CD8-positive, alpha-beta T cell (primary cell): ENCODE measurements at regions of chr11 and their contacts with region 1.

Region 1: DNA sequence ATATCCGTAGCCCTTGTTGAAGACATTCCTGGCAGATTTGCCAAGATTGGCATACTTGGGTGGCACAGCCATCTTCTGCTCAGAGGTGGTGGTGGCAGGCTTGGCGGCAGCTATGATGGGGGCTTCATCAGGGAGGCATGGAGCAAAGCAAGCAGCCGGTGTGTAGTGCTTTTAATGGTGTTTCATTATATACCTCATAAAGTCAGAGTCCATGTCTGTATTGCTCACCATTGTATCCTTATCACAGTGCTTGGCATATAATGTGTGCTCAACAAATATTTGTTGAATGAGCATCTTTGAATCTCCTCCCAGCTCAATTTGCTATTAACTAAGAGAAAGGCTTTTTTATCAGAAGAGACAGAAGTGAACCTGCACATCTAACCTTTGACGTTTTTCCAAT is 7.8 kb upstream of the DNHD1 start:
- DNase-seq: no peak
- ATAC-seq: no peak
- H3K4me3 ChIP-seq: no peak overlapping the region
- H3K4me3 Mint-ChIP-seq: no peak overlapping the region
- H3K27ac ChIP-seq: no peak overlapping the region
- H3K27ac Mint-ChIP-seq: no peak overlapping the region
- H3K4me1 ChIP-seq: no peaks in the 10 kb centered on the region
- H3K4me1 Mint-ChIP-seq: peaks cover 4% of the 10 kb centered on the region
- H3K27me3 ChIP-seq: no peaks in the 10 kb centered on the region
- H3K27me3 Mint-ChIP-seq: no peaks in the 10 kb centered on the region
- CTCF ChIP-seq: no peak

Region 2: DNA sequence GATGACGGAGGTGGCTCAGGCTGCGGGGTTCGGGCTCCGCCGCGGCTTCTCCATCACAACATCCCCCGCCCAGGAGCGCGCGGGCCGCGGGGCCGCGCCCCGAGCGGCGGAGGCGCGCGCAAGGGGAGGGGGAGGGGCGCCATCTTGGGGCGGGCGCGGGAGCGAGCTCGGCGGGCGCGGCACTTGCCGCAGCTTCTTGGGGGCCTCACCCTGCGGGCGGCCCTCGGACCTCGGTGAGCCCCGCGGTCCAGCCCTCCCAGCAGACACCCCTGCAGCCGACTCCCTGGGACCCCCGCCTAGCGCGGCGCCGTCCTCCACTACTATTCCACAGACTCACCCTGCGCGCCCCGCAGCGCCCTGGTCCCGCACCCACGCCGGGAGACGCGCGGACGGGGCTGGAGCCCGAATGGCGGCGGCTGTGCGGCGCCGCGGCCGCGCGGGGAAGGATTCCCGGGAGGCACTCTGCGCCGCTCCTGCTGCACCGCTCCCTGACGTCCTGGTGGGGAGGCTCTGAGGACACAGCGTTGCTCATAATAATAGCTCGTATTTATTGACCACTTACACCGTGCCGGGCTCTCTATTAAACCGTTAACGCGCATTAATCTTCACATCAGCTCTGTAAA is 70.2 kb before region 1 on chr11 and contains the start of gene APBB1:
- CTCF ChIA-PET with region 1: no interaction called
- POLR2A ChIA-PET with region 1: no interaction called
- intact Hi-C with region 1: no loop called
- DNase-seq: peak; percentile 49 to 88 (median 77)
- ATAC-seq: peak; percentile 69
- H3K4me3 ChIP-seq: peak within 1 kb of the TSS; percentile 51 to 81
- H3K4me3 Mint-ChIP-seq: peak within 1 kb of the TSS; percentile 84
- H3K27ac ChIP-seq: peak within 1 kb of the TSS; percentile 48 to 82
- H3K27ac Mint-ChIP-seq: peak within 1 kb of the TSS; percentile 89
- H3K4me1 ChIP-seq: peaks cover 46% of the 10 kb centered on the region
- H3K4me1 Mint-ChIP-seq: peaks cover 10% of the 10 kb centered on the region
- H3K27me3 ChIP-seq: no peaks in the 10 kb centered on the region
- H3K27me3 Mint-ChIP-seq: peaks cover 3% of the 10 kb centered on the region
- CTCF ChIP-seq: no peak
- total RNA-seq, gene APBB1: 130 to 147 TPM

Region 3: GRCh38 chr11:6505577-6506240 is 16.4 kb after region 1 on chr11:
- CTCF ChIA-PET with region 1: interaction called, 13 read pairs
- POLR2A ChIA-PET with region 1: no interaction called
- intact Hi-C with region 1: no loop called
- DNase-seq: peak in 3 of 9 experiments; percentile 9 to 64 (median 51)
- ATAC-seq: peak; percentile 61
- H3K4me3 ChIP-seq: no peak overlapping the region
- H3K4me3 Mint-ChIP-seq: no peak overlapping the region
- H3K27ac ChIP-seq: no peak overlapping the region
- H3K27ac Mint-ChIP-seq: no peak overlapping the region
- H3K4me1 ChIP-seq: no peaks in the 10 kb centered on the region
- H3K4me1 Mint-ChIP-seq: peaks cover 4% of the 10 kb centered on the region
- H3K27me3 ChIP-seq: no peaks in the 10 kb centered on the region
- H3K27me3 Mint-ChIP-seq: no peaks in the 10 kb centered on the region
- CTCF ChIP-seq: peak; percentile 73